Upper lobe of right lung (tissue), 1 donor: ENCODE measurements at regions of chr5 and their contacts with region 1.

Region 1: DNA sequence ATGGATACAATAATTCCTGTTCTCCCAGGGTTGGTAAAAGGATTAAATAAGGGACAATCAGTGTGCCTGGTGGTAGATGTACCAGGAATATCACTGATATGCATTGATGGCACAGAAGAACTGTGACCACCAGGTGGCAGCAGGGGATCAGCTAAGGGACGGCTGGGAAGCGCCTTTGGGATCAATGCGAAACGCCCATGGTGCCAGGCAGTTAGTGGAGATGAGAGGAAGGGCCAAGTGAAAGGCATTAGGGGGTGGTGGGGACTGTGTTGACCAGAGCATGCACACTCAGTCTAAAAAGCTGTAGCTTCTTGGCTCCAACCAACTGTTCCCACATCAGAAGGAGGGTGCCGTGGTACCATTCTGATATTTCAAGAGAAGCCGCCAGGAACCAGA is 55.6 kb downstream of the ARHGEF37 start:
- DNase-seq: no peak
- ATAC-seq: peak; percentile 83
- H3K4me3 ChIP-seq: no peak overlapping the region
- H3K27ac ChIP-seq: no peak overlapping the region
- H3K4me1 ChIP-seq: peaks cover 7% of the 10 kb centered on the region
- H3K27me3 ChIP-seq: no peaks in the 10 kb centered on the region
- CTCF ChIP-seq: peak; percentile 80

Region 2: GRCh38 chr5:148897842-148898241 is 739.0 kb before region 1 on chr5:
- intact Hi-C with region 1: no loop called
- DNase-seq: no peak
- ATAC-seq: no peak
- H3K4me3 ChIP-seq: no peak overlapping the region
- H3K27ac ChIP-seq: no peak overlapping the region
- H3K4me1 ChIP-seq: no peaks in the 10 kb centered on the region
- H3K27me3 ChIP-seq: no peaks in the 10 kb centered on the region
- CTCF ChIP-seq: no peak

Region 3: DNA sequence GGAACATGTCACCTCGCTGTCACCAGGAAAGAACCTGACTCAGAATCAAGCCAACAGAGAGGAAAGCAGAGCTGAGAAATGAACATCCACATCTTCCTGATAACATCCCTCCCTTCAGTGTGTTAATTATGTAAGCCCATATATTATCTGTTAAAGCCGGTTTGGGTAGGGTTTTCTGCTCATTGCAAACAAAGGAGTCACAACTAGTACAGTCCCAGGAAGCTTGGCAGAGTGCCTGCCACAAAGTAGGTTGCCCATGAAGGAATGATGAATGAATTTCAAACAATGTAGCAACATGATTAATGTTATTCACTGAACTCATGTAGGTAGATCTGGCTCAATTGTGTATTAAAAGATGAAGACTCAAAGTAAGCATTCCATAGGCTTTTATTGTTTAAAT is 82.8 kb after region 1 on chr5:
- intact Hi-C with region 1: no loop called
- DNase-seq: no peak
- ATAC-seq: no peak
- H3K4me3 ChIP-seq: no peak overlapping the region
- H3K27ac ChIP-seq: no peak overlapping the region
- H3K4me1 ChIP-seq: peaks cover 2% of the 10 kb centered on the region
- H3K27me3 ChIP-seq: no peaks in the 10 kb centered on the region
- CTCF ChIP-seq: no peak

Region 4: GRCh38 chr5:149828161-149828884 is 191.5 kb after region 1 on chr5:
- intact Hi-C with region 1: loop called (anchors 2 kb)
- DNase-seq: peak; percentile 89
- ATAC-seq: peak; percentile 92
- H3K4me3 ChIP-seq: no peak overlapping the region
- H3K27ac ChIP-seq: no peak overlapping the region
- H3K4me1 ChIP-seq: peaks cover 6% of the 10 kb centered on the region
- H3K27me3 ChIP-seq: no peaks in the 10 kb centered on the region
- CTCF ChIP-seq: peak; percentile 92

Region 5: DNA sequence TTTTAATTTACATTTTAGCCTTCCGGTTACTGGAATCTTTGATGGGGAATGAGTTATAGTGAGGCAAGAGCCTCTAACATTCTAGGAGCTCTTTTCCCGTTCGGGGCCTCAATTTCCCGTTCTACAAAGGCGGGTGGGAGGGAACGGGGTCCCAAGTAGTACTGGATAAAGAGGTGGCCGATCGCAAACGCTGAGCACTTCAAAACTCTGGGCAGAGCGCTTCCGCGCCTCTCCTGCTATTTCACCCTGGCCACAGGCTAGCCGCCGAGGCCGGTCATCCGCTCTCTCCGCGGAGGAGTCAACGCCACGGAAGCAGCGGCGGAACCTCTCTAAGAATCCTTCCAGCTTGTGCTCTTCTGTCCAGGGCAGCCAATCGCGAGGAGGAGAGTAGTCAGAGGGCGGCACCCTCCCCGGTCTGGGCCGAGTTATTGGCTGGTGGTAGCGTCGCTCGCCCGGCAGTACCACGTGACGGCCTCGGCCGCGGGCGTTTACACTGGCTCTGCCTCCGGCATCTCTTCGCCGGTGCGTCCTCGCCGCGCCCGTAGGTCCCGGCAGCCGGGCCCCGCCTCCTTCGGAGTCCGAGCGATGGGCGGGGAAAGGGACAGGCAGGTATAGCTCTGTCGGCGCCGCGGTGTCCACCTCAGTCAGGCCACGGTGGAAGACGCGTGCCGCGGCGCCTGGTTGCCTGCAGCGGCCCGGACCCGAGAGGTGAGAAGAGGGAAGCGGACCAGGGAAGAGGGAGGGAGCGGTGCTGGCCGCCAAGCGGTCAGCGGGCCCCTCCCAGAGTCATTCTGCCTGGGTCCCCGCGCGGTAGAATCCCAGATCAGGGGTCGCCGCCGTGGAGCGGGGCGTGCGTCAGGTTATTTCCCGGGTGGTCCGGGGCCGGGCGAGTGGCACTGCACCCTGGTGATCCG is 323.7 kb after region 1 on chr5 and contains the start of gene SLC26A2:
- intact Hi-C with region 1: loop called (anchors 10 kb)
- DNase-seq: peak; percentile 99
- ATAC-seq: peak; percentile 99
- H3K4me3 ChIP-seq: peak within 1 kb of the TSS; percentile 76
- H3K27ac ChIP-seq: peak within 1 kb of the TSS; percentile 96
- H3K4me1 ChIP-seq: peaks cover 10% of the 10 kb centered on the region
- H3K27me3 ChIP-seq: no peaks in the 10 kb centered on the region
- CTCF ChIP-seq: no peak
- total RNA-seq, gene SLC26A2: 18.9 TPM